Aorta (tissue), 5 donors: ENCODE measurements at regions of chr1 and their contacts with region 1.

Region 1: GRCh38 chr1:43991476-43992231 is at the start of gene CCDC24:
- DNase-seq: peak; percentile 93 to 97
- ATAC-seq: peak; percentile 92
- H3K4me3 ChIP-seq: peak within 1 kb of the TSS; percentile 36 to 55
- H3K27ac ChIP-seq: peak within 1 kb of the TSS in 1 of 2 donors; percentile 34
- H3K4me1 ChIP-seq: no peaks in the 10 kb centered on the region
- H3K27me3 ChIP-seq: no peaks in the 10 kb centered on the region
- total RNA-seq, gene CCDC24: 2.6 to 6.0 TPM

Region 2: GRCh38 chr1:44029906-44030604 is 38.4 kb after region 1 on chr1:
- intact Hi-C with region 1: loop called in 1 of 2 experiments (anchors 5 kb)
- DNase-seq: peak; percentile 94 to 95
- ATAC-seq: peak; percentile 90
- H3K4me3 ChIP-seq: peak overlapping the region; percentile 72 to 79
- H3K27ac ChIP-seq: peak overlapping the region in 1 of 2 donors; percentile 75
- H3K4me1 ChIP-seq: no peaks in the 10 kb centered on the region
- H3K27me3 ChIP-seq: no peaks in the 10 kb centered on the region

Region 3: DNA sequence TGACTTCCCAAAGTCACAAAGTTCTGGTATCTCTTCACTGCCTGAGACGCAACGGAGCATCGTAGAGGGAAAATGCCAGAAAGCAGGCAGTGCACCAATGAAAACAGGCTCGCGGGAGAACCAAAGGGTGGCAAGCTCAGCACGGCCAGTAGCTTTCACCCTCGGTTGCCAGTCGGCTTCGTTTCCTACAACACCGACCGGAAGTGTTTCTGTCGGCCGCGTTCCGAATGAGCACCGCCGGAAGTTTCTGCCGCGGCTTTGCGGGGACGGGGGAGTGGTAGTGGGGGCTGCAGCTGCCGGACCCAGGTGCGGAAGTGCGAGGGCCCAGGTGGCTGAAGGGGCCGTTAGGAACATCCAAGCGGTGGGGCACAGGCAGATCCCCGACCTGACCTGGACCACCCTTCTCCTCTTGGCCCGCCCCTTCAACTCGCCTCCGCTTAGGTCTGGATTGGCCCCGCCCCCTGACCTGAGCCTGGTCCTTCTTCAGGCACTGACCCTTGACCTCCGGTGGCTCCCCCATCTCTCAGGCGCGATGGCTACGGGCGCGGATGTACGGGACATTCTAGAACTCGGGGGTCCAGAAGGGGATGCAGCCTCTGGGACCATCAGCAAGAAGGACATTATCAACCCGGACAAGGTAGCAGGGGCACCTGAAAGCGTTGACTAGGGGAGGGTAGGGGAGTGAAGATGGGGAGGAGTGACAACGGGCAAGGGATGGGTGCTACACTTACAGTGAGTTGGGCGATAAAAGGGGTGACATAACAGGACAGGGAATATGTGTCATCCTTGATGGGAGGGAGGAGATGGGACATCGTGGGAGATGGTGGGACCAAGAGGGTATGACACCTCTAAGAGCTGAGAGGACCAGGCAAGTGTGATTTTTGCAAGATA is 221.8 kb after region 1 on chr1 and contains the start of gene DMAP1:
- intact Hi-C with region 1: loop called in 1 of 2 experiments (anchors 10 kb)
- DNase-seq: peak; percentile 88 to 94
- ATAC-seq: peak; percentile 93
- H3K4me3 ChIP-seq: peak within 1 kb of the TSS; percentile 23 to 94
- H3K27ac ChIP-seq: no peak within 1 kb of the TSS
- H3K4me1 ChIP-seq: no peaks in the 10 kb centered on the region
- H3K27me3 ChIP-seq: no peaks in the 10 kb centered on the region
- total RNA-seq, gene DMAP1: 30.1 to 36.4 TPM